B cell (primary cell): ENCODE measurements at regions of chr15 and their contacts with region 1.

Region 1: DNA sequence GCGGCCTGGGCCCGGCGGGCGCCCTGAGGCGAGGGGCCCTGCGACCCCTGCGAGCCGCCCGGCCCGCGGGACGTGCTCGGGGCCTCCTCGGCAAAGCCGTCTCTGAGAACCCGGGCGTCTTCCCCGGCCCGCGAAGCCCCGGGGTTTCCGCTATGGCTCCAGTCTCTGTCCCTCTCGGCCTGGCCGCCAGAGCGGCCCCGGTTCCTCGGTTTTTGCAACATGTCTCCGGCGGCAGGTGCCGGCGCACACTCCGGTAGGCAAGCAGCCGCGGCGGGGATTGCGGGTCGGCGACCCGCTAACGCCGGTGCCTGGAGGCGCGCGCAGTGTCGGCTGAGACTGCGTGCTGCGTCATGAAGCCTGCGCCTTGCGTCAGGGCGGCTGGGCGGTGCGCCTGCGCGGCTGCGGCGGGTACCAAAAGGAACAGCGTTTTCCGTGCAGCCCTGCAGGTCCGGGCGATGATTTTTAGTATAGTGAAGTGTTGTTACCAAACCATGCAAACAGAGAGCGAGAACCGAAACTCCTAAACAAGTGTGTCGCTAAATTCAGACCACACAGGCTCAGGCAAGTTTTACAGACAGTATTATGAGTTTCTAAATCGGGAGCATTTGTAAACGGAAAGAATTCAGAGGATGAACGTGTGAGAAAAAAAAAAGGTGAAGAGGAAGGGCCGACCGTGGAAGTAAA is at the start of gene NSMCE3:
- DNase-seq: peak; percentile 96
- ATAC-seq: peak; percentile 93
- H3K4me3 ChIP-seq: peak within 1 kb of the TSS; percentile 64 to 80 (median 76)
- H3K4me3 Mint-ChIP-seq: peak within 1 kb of the TSS; percentile 99
- H3K27ac ChIP-seq: peak within 1 kb of the TSS; percentile 93 to 98
- H3K27ac Mint-ChIP-seq: peak within 1 kb of the TSS; percentile 99
- H3K4me1 ChIP-seq: peaks cover 32% of the 10 kb centered on the region in 2 donors
- H3K4me1 Mint-ChIP-seq: peaks cover 52% of the 10 kb centered on the region
- H3K27me3 ChIP-seq: no peaks in the 10 kb centered on the region
- H3K27me3 Mint-ChIP-seq: no peaks in the 10 kb centered on the region
- CTCF ChIP-seq: no peak
- total RNA-seq, gene NSMCE3: 16.1 and 16.8 TPM in 2 replicates

Region 2: DNA sequence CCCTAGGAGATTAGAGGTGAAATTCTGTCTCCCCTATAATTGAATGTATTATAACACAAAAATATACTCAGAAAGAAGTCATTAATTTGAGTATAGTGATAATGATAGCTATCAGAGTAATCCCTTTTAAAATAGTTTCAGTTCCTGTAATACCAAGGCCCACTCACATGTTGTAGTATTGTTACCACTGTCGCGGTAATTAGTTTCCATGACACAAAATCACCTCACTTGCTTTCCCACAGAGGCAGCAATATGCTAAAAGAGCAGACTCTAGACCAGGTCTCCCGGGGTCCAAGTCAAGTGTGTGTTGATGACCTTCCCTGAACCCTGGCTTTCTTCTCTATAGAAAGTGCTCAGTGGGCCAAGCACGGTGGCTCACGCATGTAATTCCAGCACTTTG is 39.5 kb after region 1 on chr15:
- CTCF ChIA-PET with region 1: no interaction called
- POLR2A ChIA-PET with region 1: no interaction called
- intact Hi-C with region 1: loop called (anchors 1 kb)
- DNase-seq: peak; percentile 46
- ATAC-seq: peak; percentile 73
- H3K4me3 ChIP-seq: no peak overlapping the region
- H3K4me3 Mint-ChIP-seq: no peak overlapping the region
- H3K27ac ChIP-seq: no peak overlapping the region
- H3K27ac Mint-ChIP-seq: peak overlapping the region; percentile 51
- H3K4me1 ChIP-seq: peaks cover 10 to 14% of the 10 kb centered on the region in 2 donors
- H3K4me1 Mint-ChIP-seq: peaks cover 29% of the 10 kb centered on the region
- H3K27me3 ChIP-seq: no peaks in the 10 kb centered on the region
- H3K27me3 Mint-ChIP-seq: peaks cover 8% of the 10 kb centered on the region
- CTCF ChIP-seq: no peak